ENCODE measurements at regions of chr13 and their contacts with region 1.

Region 1: GRCh38 chr13:68490594-68490993 is 1260.5 kb upstream of the PCDH9 start:
- DNase-seq: no peak
- H3K4me3 ChIP-seq: no peak overlapping the region
- H3K27ac ChIP-seq: no peak overlapping the region
- H3K4me1 ChIP-seq: no peaks in the 10 kb centered on the region
- H3K27me3 ChIP-seq: no peaks in the 10 kb centered on the region
- CTCF ChIP-seq: no peak
- EP300 ChIP-seq: no peak
- POLR2A ChIP-seq: no peak

Region 2: GRCh38 chr13:68523838-68524424 is 33.3 kb after region 1 on chr13:
- in situ Hi-C with region 1: no loop called
- intact Hi-C with region 1: loop called (anchors 2 kb)
- DNase-seq: no peak
- H3K4me3 ChIP-seq: no peak overlapping the region
- H3K27ac ChIP-seq: no peak overlapping the region
- H3K4me1 ChIP-seq: no peaks in the 10 kb centered on the region
- H3K27me3 ChIP-seq: no peaks in the 10 kb centered on the region
- CTCF ChIP-seq: no peak
- EP300 ChIP-seq: no peak
- POLR2A ChIP-seq: no peak

Region 3: DNA sequence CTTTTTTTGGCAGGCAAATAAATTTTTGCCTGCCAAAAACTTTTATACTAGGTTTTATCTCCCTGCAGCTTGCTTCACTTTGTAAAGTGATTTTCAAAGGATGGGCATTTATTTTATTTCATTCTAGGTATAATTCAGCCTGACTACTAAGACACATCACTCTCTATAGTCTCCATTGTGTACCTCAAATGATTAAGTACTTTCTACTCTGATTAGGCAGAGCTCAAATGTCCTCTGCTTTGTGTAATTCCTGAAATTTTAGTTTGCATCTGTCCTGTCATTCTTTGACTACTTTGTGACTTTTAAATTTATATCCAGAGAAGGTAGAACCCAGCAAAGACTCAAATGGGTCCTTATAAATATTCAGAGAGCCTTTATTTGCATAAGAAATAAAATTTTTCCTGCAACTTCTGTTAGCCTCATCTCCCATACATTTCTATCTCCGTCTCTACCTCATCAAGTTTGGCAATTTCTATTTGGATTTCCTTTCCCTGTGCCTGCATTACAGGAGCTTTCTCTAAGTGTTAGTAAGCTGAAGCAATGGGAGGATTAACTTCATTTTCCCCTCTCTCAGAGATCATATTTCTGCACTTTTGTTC is 579.0 kb after region 1 on chr13:
- in situ Hi-C with region 1: no loop called
- intact Hi-C with region 1: no loop called
- DNase-seq: no peak
- H3K4me3 ChIP-seq: no peak overlapping the region
- H3K27ac ChIP-seq: no peak overlapping the region
- H3K4me1 ChIP-seq: no peaks in the 10 kb centered on the region
- H3K27me3 ChIP-seq: no peaks in the 10 kb centered on the region
- CTCF ChIP-seq: no peak
- EP300 ChIP-seq: no peak
- POLR2A ChIP-seq: no peak